GM10248 (cell line): ENCODE measurements at regions of chr3 and their contacts with region 1.

Region 1: GRCh38 chr3:171328419-171329082 is 131.7 kb downstream of the TNIK start:
- DNase-seq: no peak
- CTCF ChIP-seq: peak; percentile 32

Region 2: DNA sequence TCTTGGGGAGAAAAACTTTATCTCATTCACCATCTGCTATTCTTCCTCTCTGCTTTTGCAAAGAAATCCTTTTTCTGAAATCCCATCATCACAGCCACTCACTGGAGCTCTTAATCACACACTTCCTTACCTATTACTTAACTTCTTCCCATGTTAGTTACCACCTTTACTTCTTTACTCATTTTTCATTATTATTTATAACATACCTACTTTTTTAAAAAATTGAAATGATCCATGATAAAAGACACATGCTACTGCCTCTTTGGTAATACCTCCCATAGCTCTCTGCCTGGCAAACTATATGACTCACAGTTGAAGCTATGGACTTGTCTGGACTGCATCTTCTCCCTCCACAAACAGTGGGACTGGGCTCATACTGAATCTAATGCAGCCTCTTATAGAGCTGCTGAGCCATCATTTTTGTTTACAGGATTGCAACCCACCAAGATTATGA is 18.6 kb before region 1 on chr3:
- CTCF ChIA-PET with region 1: interaction called, 10 read pairs
- POLR2A ChIA-PET with region 1: no interaction called
- DNase-seq: no peak
- CTCF ChIP-seq: no peak

Region 3: DNA sequence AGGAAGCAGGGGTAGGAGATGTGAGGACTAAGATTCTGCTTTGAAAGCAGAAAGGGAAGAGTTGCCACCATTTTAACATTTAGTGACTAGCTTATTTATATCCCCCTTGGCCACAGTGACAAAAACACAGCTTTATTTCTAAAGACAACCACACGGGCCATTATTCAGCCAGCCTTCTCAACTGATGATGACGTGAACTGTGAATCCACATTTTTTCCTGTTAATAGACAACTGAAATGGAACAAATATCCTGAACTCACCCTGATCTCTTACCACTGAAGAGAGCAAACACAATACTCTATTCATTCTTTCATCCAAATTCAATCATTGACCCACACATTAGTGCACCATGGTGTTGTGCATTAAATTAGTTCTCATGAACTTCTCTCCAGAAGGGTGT is 13.4 kb before region 1 on chr3:
- CTCF ChIA-PET with region 1: interaction called, 10 read pairs
- POLR2A ChIA-PET with region 1: no interaction called
- DNase-seq: no peak
- CTCF ChIP-seq: no peak

Region 4: DNA sequence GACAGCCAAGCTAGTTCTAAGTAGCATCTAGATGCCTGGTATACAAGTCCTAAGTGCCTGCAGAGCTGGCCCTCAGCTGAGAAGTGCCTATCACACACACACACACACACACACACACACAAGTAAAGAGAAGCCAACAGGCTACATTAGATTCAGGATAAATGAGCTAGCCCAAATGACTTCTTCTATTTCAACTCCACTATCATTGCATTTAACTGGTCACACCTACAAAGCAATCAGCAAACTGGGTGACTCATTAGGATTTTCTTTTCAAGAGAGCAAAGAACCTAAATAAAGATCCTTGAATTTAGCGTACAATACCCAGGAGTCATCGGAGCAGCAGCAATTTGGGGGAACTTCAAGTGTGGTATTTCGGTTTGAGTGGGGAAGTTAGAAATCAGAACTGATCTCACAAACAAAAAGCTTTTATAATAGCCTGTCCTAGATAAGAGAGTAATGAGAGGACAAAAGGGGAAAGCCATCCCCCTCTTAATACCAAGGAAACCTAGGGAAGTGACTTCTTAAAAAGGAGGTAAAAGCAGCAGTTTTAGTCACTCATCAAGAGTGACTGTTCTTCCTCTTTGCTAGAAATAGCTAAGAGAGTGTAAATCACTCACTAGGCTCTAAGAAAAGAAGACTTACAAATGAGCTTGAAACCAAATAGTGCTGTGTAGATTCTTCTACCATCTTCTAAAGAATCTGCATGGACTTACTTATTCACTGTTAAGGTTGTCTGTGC is 18.9 kb after region 1 on chr3:
- CTCF ChIA-PET with region 1: interaction called, 19 read pairs
- POLR2A ChIA-PET with region 1: no interaction called
- DNase-seq: peak; percentile 20
- CTCF ChIP-seq: no peak

Region 5: GRCh38 chr3:172808969-172809546 is 1480.5 kb after region 1 on chr3:
- CTCF ChIA-PET with region 1: no interaction called
- POLR2A ChIA-PET with region 1: no interaction called
- DNase-seq: no peak
- CTCF ChIP-seq: peak; percentile 28